B cell (primary cell): ENCODE measurements at regions of chr11 and their contacts with region 1.

Region 1: GRCh38 chr11:112627588-112628045 is 333.6 kb upstream of the NCAM1 start:
- DNase-seq: no peak
- ATAC-seq: no peak
- H3K4me3 ChIP-seq: no peak overlapping the region
- H3K4me3 Mint-ChIP-seq: no peak overlapping the region
- H3K27ac ChIP-seq: no peak overlapping the region
- H3K27ac Mint-ChIP-seq: no peak overlapping the region
- H3K4me1 ChIP-seq: no peaks in the 10 kb centered on the region
- H3K4me1 Mint-ChIP-seq: no peaks in the 10 kb centered on the region
- H3K27me3 ChIP-seq: no peaks in the 10 kb centered on the region
- H3K27me3 Mint-ChIP-seq: peaks cover 10% of the 10 kb centered on the region
- CTCF ChIP-seq: no peak

Region 2: DNA sequence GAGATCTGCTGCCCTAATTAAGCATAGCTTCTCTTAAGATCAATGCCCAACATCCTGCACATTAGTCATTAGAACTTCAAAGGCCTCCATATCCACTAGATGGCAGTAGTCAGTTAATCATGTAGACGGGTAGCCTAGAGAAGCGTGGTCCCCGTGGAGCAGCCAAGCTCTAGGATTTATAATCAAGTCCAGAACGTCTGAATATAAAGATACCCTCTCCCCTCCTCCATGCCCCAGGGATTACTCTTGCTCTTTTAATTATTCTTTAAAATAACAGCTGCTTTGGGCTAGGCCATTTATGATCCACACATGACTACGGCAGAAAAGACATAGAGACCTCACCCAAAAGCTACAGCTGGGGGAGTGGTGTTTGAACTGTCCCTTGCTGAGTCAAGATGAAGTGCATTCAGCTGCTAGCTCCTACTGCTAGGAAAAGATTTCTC is 39.3 kb before region 1 on chr11:
- CTCF ChIA-PET with region 1: interaction called, 13 read pairs
- POLR2A ChIA-PET with region 1: no interaction called
- intact Hi-C with region 1: no loop called
- DNase-seq: peak; percentile 60
- ATAC-seq: peak; percentile 47
- H3K4me3 ChIP-seq: no peak overlapping the region
- H3K4me3 Mint-ChIP-seq: no peak overlapping the region
- H3K27ac ChIP-seq: no peak overlapping the region
- H3K27ac Mint-ChIP-seq: no peak overlapping the region
- H3K4me1 ChIP-seq: no peaks in the 10 kb centered on the region
- H3K4me1 Mint-ChIP-seq: peaks cover 2% of the 10 kb centered on the region
- H3K27me3 ChIP-seq: peaks cover 0 to 2% (median 1%) of the 10 kb centered on the region in 4 experiments
- H3K27me3 Mint-ChIP-seq: peaks cover 10% of the 10 kb centered on the region
- CTCF ChIP-seq: peak; percentile 75